Activated CD8-positive, alpha-beta T cell treated with anti-CD3 and anti-CD28 coated beads for 36 hours (primary cell): ENCODE measurements at regions of chr17 and their contacts with region 1.

Region 1: GRCh38 chr17:35540589-35541404 is 3.3 kb upstream of the SLFN12L start:
- DNase-seq: peak; percentile 71
- ATAC-seq: peak; percentile 28
- H3K4me3 Mint-ChIP-seq: peak overlapping the region; percentile 87
- H3K27ac Mint-ChIP-seq: peak overlapping the region; percentile 97
- H3K4me1 Mint-ChIP-seq: peaks cover 49% of the 10 kb centered on the region
- H3K27me3 Mint-ChIP-seq: no peaks in the 10 kb centered on the region
- CTCF ChIP-seq: no peak

Region 2: GRCh38 chr17:35214631-35215273 is 326.0 kb before region 1 on chr17:
- CTCF ChIA-PET with region 1: interaction called, 10 read pairs
- POLR2A ChIA-PET with region 1: interaction called, 15 read pairs
- intact Hi-C with region 1: no loop called
- DNase-seq: peak; percentile 60
- ATAC-seq: peak; percentile 65
- H3K4me3 Mint-ChIP-seq: peak overlapping the region; percentile 59
- H3K27ac Mint-ChIP-seq: peak overlapping the region; percentile 91
- H3K4me1 Mint-ChIP-seq: peaks cover 79% of the 10 kb centered on the region
- H3K27me3 Mint-ChIP-seq: no peaks in the 10 kb centered on the region
- CTCF ChIP-seq: no peak

Region 3: DNA sequence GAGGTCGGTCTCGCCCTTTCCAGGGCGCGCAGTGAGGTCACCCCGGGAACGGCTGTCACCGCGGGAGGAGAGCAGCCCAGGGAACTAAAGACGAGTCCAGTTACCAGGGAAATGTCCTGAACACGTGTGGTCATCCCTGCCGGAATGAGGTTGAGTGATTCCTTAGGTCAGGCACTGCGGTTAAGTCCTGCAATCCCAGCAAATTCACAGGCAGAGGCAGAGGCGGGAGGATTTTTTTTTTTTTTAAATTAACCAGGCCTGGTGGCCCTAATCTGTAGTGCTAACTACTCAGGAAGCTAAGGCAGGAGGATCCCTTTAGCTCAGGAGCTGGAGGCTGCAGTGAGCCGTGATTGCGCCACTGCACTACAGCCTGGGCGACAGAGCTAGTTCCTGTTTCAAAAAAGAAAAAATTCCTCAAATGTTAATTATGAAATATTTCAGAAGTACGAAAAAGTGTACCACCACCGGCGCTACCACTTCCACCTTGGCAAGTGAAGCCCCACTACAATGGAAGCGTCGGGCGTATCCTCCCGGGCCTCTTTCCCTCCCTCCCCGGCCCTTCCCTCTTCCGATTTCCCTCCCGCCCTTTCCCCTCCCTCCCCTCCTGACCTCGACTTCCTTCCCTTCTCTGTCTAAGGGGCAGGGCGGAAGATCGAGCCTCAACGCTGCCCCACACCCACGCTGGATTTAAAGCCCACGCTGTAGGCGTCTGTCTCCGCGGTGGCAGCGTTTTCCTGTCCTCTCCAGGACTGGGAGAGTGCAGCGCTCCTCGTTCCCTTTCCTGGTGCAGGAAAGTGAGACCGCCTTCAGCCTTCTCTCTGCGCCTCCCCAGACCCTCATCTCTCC is 194.6 kb before region 1 on chr17:
- CTCF ChIA-PET with region 1: no interaction called
- POLR2A ChIA-PET with region 1: interaction called, 7 read pairs
- intact Hi-C with region 1: loop called (anchors 10 kb)
- DNase-seq: peak; percentile 36
- ATAC-seq: peak; percentile 62
- H3K4me3 Mint-ChIP-seq: peak overlapping the region; percentile 75
- H3K27ac Mint-ChIP-seq: peak overlapping the region; percentile 74
- H3K4me1 Mint-ChIP-seq: peaks cover 41% of the 10 kb centered on the region
- H3K27me3 Mint-ChIP-seq: peaks cover 2% of the 10 kb centered on the region
- CTCF ChIP-seq: no peak

Region 4: GRCh38 chr17:35568541-35568940 is 27.7 kb after region 1 on chr17:
- CTCF ChIA-PET with region 1: interaction called, 10 read pairs
- POLR2A ChIA-PET with region 1: interaction called, 5 read pairs
- intact Hi-C with region 1: no loop called
- DNase-seq: peak; percentile 68
- ATAC-seq: peak; percentile 32
- H3K4me3 Mint-ChIP-seq: peak overlapping the region; percentile 87
- H3K27ac Mint-ChIP-seq: peak overlapping the region; percentile 96
- H3K4me1 Mint-ChIP-seq: peaks cover 29% of the 10 kb centered on the region
- H3K27me3 Mint-ChIP-seq: no peaks in the 10 kb centered on the region
- CTCF ChIP-seq: no peak

Region 5: GRCh38 chr17:35587074-35587971 is 46.5 kb after region 1 on chr17 and contains the start of gene AP2B1:
- CTCF ChIA-PET with region 1: interaction called, 6 read pairs
- POLR2A ChIA-PET with region 1: interaction called, 5 read pairs
- intact Hi-C with region 1: loop called (anchors 5 kb)
- DNase-seq: peak; percentile 96
- ATAC-seq: peak; percentile 95
- H3K4me3 Mint-ChIP-seq: peak within 1 kb of the TSS; percentile 99
- H3K27ac Mint-ChIP-seq: peak within 1 kb of the TSS; percentile 99
- H3K4me1 Mint-ChIP-seq: peaks cover 22% of the 10 kb centered on the region
- H3K27me3 Mint-ChIP-seq: no peaks in the 10 kb centered on the region
- CTCF ChIP-seq: no peak
- total RNA-seq, gene AP2B1: 157 to 161 TPM

Region 6: DNA sequence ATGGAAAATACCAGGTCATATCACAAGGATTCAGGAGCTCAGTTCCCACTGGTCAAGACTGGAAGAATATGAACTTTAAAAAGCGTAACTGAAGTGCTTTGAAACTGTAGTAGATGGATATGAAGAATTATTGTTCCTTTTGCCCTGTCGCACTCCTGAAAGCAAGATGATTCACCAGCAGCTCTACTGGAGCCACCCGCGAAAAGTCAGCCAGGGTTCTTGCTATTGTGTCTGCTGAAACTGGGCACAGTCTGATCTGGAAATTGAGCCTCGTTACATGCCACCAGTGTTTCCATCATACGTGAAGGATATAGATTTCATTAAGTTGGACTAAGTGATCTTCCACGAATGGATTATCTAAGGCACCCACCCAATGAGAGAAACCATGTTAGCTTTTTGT is 62.9 kb after region 1 on chr17:
- CTCF ChIA-PET with region 1: no interaction called
- POLR2A ChIA-PET with region 1: no interaction called
- intact Hi-C with region 1: no loop called
- DNase-seq: no peak
- ATAC-seq: no peak
- H3K4me3 Mint-ChIP-seq: no peak overlapping the region
- H3K27ac Mint-ChIP-seq: no peak overlapping the region
- H3K4me1 Mint-ChIP-seq: peaks cover 6% of the 10 kb centered on the region
- H3K27me3 Mint-ChIP-seq: no peaks in the 10 kb centered on the region
- CTCF ChIP-seq: no peak

Region 7: GRCh38 chr17:35621768-35622167 is 81.0 kb after region 1 on chr17:
- CTCF ChIA-PET with region 1: no interaction called
- POLR2A ChIA-PET with region 1: no interaction called
- intact Hi-C with region 1: no loop called
- DNase-seq: no peak
- ATAC-seq: no peak
- H3K4me3 Mint-ChIP-seq: no peak overlapping the region
- H3K27ac Mint-ChIP-seq: no peak overlapping the region
- H3K4me1 Mint-ChIP-seq: no peaks in the 10 kb centered on the region
- H3K27me3 Mint-ChIP-seq: no peaks in the 10 kb centered on the region
- CTCF ChIP-seq: no peak